ENCODE measurements at regions of chr11 and their contacts with region 1.

Region 1: DNA sequence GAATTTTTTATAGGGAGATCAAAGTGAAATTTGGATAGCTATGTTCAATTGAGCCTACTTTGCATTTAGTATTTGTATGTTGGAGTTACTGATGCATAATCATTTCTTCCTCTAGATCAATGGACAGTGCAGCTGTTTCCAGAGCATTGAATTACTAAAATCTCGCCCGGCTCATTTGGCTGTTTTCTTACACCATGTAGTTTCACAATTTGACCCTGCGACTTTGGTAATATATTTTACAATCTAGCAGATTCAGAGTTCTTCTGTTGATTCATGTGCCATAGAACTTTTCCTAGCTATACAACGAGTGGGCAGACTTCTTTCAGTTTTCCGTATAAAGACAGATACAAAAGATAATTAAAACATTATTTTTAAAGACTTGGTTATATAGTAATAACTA is 70.0 kb upstream of the GRIK4 start:
- DNase-seq: no peak
- ATAC-seq: no peak
- H3K4me3 ChIP-seq: no peak overlapping the region
- H3K27ac ChIP-seq: no peak overlapping the region
- H3K4me1 ChIP-seq: no peaks in the 10 kb centered on the region
- H3K27me3 ChIP-seq: no peaks in the 10 kb centered on the region
- CTCF ChIP-seq: no peak
- POLR2A ChIP-seq: no peak
- RAD21 ChIP-seq: no peak

Region 2: DNA sequence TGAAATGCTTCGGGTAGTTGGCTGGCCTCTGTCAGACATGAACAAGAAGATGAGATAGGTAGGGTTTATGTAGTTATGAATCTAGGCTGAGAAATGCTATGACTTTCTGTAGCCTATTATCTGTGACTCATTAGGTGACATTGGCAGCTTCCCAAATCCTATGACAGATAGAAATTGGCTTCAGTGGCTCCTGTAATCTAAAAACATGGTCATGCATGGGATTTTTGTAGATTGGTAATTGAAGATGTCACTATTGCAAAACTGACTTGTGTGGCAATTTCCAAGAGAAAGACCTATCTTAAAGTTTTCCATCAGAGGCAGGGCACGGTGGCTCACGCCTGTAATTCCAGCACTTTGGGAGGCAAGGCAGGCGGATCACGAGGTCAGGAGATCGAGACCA is 40.6 kb after region 1 on chr11:
- CTCF ChIA-PET with region 1: no interaction called
- POLR2A ChIA-PET with region 1: no interaction called
- dilution Hi-C with region 1: no loop called
- in situ Hi-C with region 1: no loop called
- intact Hi-C with region 1: loop called (anchors 5 kb)
- DNase-seq: peak; percentile 39
- ATAC-seq: no peak
- H3K4me3 ChIP-seq: no peak overlapping the region
- H3K27ac ChIP-seq: no peak overlapping the region
- H3K4me1 ChIP-seq: peaks cover 2% of the 10 kb centered on the region; the same call in 1 of the 2 replicates
- H3K27me3 ChIP-seq: no peaks in the 10 kb centered on the region
- CTCF ChIP-seq: no peak
- POLR2A ChIP-seq: no peak
- RAD21 ChIP-seq: no peak

Region 3: GRCh38 chr11:120590472-120590871 is 148.9 kb after region 1 on chr11:
- CTCF ChIA-PET with region 1: no interaction called
- POLR2A ChIA-PET with region 1: no interaction called
- dilution Hi-C with region 1: no loop called
- in situ Hi-C with region 1: no loop called
- intact Hi-C with region 1: no loop called
- DNase-seq: peak; percentile 33
- ATAC-seq: peak; percentile 37
- H3K4me3 ChIP-seq: no peak overlapping the region
- H3K27ac ChIP-seq: no peak overlapping the region
- H3K4me1 ChIP-seq: peaks cover 1% of the 10 kb centered on the region; the same call in 1 of the 2 replicates
- H3K27me3 ChIP-seq: peaks cover 8% of the 10 kb centered on the region; the same call in 1 of the 2 replicates
- CTCF ChIP-seq: no peak
- POLR2A ChIP-seq: no peak
- RAD21 ChIP-seq: no peak

Measured in IMR-90 (cell line).